B cell (primary cell): ENCODE measurements at regions of chr1 and their contacts with region 1.

Region 1: DNA sequence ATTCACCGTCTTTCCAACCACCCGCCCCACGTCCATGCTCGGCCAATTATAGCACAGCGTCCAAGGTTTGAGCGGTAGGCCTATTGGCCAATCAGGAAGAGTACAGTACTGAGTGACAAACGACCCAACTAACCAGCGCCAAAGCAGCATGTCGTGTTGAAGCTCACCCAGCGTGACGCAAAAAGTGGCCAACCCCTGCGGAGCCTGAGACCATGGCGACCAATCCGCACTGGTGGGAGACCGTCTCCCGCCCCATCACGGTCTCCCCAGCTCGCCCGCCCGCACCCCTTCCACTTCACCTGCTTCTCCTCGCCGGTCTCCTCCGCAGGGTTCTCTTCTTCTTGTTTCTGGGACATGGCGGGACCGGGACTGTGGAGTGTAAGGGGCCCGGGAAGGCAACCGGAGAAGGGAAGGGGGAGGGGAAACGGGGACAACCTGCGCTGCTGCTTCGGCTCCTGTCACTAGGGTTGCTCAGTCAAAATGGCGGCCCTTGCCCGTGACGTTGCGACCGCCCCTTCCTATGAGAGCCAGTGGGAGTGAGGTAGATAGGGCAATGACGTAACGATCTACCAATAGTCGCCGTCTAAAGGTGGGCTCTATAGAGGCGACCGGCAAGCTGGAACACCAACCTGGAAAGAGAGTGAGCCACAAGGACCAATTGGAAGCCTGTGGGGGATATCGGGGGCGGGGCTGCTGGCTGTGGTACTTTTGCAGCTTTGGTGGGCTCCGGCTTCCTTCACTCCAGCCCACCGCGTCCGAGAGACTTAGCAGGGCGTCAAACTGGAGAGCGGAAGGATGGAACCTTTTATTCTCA is at the start of gene ENSA:
- DNase-seq: peak; percentile 99
- ATAC-seq: peak; percentile 85
- H3K4me3 ChIP-seq: peak within 1 kb of the TSS; percentile 74 to 93 (median 80)
- H3K4me3 Mint-ChIP-seq: no peak within 1 kb of the TSS
- H3K27ac ChIP-seq: peak within 1 kb of the TSS; percentile 95 to 96
- H3K27ac Mint-ChIP-seq: no peak within 1 kb of the TSS
- H3K4me1 ChIP-seq: peaks cover 19 to 21% of the 10 kb centered on the region in 2 donors
- H3K4me1 Mint-ChIP-seq: peaks cover 18% of the 10 kb centered on the region
- H3K27me3 ChIP-seq: no peaks in the 10 kb centered on the region
- H3K27me3 Mint-ChIP-seq: no peaks in the 10 kb centered on the region
- CTCF ChIP-seq: no peak
- total RNA-seq, gene ENSA: 115 and 119 TPM in 2 replicates

Region 2: DNA sequence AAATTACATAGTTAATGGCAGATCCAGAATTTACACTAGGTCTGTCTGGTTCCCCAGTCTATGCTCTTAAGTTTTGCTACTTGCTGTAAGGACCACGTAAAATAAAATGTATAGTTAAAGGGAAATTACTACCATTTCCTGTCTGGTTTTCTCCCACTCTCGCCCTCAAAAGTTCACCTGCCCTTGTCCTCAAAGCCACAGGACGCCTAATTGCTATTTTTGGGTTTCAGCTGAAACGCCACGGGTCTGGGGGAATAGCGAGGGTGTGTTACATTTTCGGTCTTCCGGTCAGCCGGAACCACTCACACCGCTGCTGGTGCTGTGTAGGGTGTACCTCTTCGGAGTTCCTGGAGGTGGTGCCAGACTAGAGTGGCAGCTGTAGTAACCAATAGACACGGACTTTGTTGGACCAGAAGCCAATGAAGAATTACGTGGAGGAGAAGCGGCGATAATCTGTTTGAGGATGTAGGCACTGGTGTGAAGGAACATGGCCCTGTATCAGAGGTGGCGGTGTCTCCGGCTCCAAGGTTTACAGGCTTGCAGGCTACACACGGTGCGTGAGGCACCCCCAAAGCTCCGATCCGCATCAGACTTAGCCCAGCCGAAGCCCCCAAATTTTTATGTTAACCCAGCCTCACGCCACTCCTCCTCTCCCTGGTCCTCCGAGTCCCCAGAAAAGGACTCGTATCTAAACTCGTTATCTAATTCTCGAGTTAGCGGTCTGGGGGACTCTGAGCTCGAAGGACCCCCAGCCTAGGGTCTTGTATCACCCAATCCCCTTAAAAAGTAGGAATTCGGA is 142.2 kb before region 1 on chr1 and contains the start of gene TARS2:
- CTCF ChIA-PET with region 1: no interaction called
- POLR2A ChIA-PET with region 1: no interaction called
- intact Hi-C with region 1: loop called (anchors 1 kb)
- DNase-seq: peak; percentile 97
- ATAC-seq: peak; percentile 100
- H3K4me3 ChIP-seq: peak within 1 kb of the TSS; percentile 69 to 95 (median 84)
- H3K4me3 Mint-ChIP-seq: peak within 1 kb of the TSS; percentile 93
- H3K27ac ChIP-seq: peak within 1 kb of the TSS; percentile 75 to 78
- H3K27ac Mint-ChIP-seq: peak within 1 kb of the TSS; percentile 98
- H3K4me1 ChIP-seq: peaks cover 7 to 10% of the 10 kb centered on the region in 2 donors
- H3K4me1 Mint-ChIP-seq: peaks cover 16% of the 10 kb centered on the region
- H3K27me3 ChIP-seq: no peaks in the 10 kb centered on the region
- H3K27me3 Mint-ChIP-seq: no peaks in the 10 kb centered on the region
- CTCF ChIP-seq: no peak
- total RNA-seq, gene TARS2: 48.4 and 53.6 TPM in 2 replicates

Region 3: GRCh38 chr1:150578965-150579798 is 50.1 kb before region 1 on chr1 and contains the start of gene MCL1:
- CTCF ChIA-PET with region 1: interaction called, 20 read pairs
- POLR2A ChIA-PET with region 1: interaction called, 18 read pairs
- intact Hi-C with region 1: loop called (anchors 1 kb)
- DNase-seq: peak; percentile 94
- ATAC-seq: peak; percentile 80
- H3K4me3 ChIP-seq: peak within 1 kb of the TSS; percentile 76 to 100 (median 98)
- H3K4me3 Mint-ChIP-seq: peak within 1 kb of the TSS; percentile 99
- H3K27ac ChIP-seq: peak within 1 kb of the TSS; percentile 86 to 97
- H3K27ac Mint-ChIP-seq: peak within 1 kb of the TSS; percentile 97
- H3K4me1 ChIP-seq: peaks cover 29 to 39% of the 10 kb centered on the region in 2 donors
- H3K4me1 Mint-ChIP-seq: peaks cover 51% of the 10 kb centered on the region
- H3K27me3 ChIP-seq: no peaks in the 10 kb centered on the region
- H3K27me3 Mint-ChIP-seq: no peaks in the 10 kb centered on the region
- CTCF ChIP-seq: no peak
- total RNA-seq, gene MCL1: 214 and 219 TPM in 2 replicates

Region 4: DNA sequence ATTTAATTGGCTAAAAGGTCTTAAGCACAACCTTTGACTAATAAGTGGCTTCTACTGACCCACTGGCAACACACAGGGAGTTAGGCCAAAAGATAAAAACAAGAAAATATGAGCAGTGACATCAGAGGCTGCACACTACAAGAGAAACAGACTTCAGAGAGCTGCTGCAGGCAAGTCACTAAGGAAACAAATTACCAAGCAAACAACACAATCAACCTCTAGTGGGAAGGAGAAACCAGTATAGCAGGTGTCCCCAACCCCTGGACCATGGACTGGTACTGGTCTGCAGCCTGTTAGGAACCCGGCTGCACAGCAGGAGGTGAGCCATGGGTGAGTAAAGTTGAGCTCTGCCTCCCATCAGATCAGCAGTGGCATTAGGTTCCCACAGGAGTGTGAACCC is 20.9 kb after region 1 on chr1:
- CTCF ChIA-PET with region 1: no interaction called
- POLR2A ChIA-PET with region 1: no interaction called
- intact Hi-C with region 1: no loop called
- DNase-seq: no peak
- ATAC-seq: no peak
- H3K4me3 ChIP-seq: no peak overlapping the region
- H3K4me3 Mint-ChIP-seq: no peak overlapping the region
- H3K27ac ChIP-seq: no peak overlapping the region
- H3K27ac Mint-ChIP-seq: no peak overlapping the region
- H3K4me1 ChIP-seq: no peaks in the 10 kb centered on the region
- H3K4me1 Mint-ChIP-seq: no peaks in the 10 kb centered on the region
- H3K27me3 ChIP-seq: no peaks in the 10 kb centered on the region
- H3K27me3 Mint-ChIP-seq: no peaks in the 10 kb centered on the region
- CTCF ChIP-seq: no peak

Region 5: GRCh38 chr1:150696590-150697524 is 67.5 kb after region 1 on chr1 and contains the start of gene GOLPH3L:
- CTCF ChIA-PET with region 1: interaction called, 6 read pairs
- POLR2A ChIA-PET with region 1: interaction called, 5 read pairs
- intact Hi-C with region 1: loop called (anchors 2 kb)
- DNase-seq: peak; percentile 93
- ATAC-seq: peak; percentile 99
- H3K4me3 ChIP-seq: peak within 1 kb of the TSS; percentile 77 to 99 (median 90)
- H3K4me3 Mint-ChIP-seq: peak within 1 kb of the TSS; percentile 100
- H3K27ac ChIP-seq: peak within 1 kb of the TSS; percentile 66 to 78
- H3K27ac Mint-ChIP-seq: peak within 1 kb of the TSS; percentile 97
- H3K4me1 ChIP-seq: peaks cover 4 to 11% of the 10 kb centered on the region in 2 donors
- H3K4me1 Mint-ChIP-seq: peaks cover 19% of the 10 kb centered on the region
- H3K27me3 ChIP-seq: no peaks in the 10 kb centered on the region
- H3K27me3 Mint-ChIP-seq: no peaks in the 10 kb centered on the region
- CTCF ChIP-seq: no peak
- total RNA-seq, gene GOLPH3L: 22.1 and 25.3 TPM in 2 replicates